ENCODE measurements at regions of chr17 and their contacts with region 1.

Region 1: GRCh38 chr17:61314368-61315078 is 85.1 kb upstream of the TBX2 start:
- DNase-seq: peak; percentile 69
- H3K4me3 ChIP-seq: no peak overlapping the region
- H3K27ac ChIP-seq: peak overlapping the region; percentile 60 to 74
- H3K4me1 ChIP-seq: peaks cover 27 to 37% of the 10 kb centered on the region in 2 experiments
- H3K27me3 ChIP-seq: no peaks in the 10 kb centered on the region
- CTCF ChIP-seq: peak; percentile 52
- EP300 ChIP-seq: peak in 1 of 2 experiments; percentile 86; a peak in 2 of 4 replicates
- RAD21 ChIP-seq: peak; percentile 53

Region 2: DNA sequence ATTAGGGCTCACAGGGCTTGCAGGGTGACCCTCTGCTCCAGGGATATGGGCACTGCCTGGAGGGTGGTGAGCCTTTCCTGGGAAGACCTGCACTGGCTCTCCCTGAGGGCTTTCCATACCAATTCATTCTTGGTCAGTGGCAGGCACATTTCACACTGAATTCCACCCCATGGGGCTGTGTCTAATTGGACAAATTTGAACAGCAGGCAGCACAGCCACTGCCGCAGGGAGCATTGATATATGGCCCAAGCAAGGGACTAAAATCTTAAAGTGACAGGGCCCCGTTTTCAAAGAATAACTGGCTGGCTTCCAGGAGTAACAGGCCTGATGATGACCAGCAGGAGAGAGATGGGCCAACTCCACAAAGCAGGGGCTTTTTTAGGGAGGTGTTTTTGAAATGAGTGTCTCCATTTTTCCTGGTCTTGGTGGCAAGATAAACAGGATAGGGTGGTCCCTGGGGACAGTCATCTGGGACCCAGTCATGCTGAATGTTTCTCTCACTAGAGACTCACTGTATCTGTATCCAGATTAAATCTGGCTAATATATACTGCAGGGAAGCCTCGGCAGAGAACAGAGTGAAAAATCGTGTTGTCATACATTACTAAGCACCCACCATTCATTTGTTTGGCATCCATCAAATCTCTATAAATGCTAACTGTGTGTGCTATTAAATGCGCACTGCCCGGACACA is 11.0 kb after region 1 on chr17:
- CTCF ChIA-PET with region 1: interaction called, 17 read pairs
- POLR2A ChIA-PET with region 1: no interaction called
- DNase-seq: peak; percentile 78
- H3K4me3 ChIP-seq: 0 out of 4 replicates have a peak overlapping the region, but pooled peaks of 1 of the 2 experiments have one; percentile 4
- H3K27ac ChIP-seq: peak overlapping the region; percentile 75 to 86
- H3K4me1 ChIP-seq: peaks cover 25 to 38% of the 10 kb centered on the region in 2 experiments
- H3K27me3 ChIP-seq: no peaks in the 10 kb centered on the region
- CTCF ChIP-seq: no peak; the same call in 1 of the 2 replicates
- EP300 ChIP-seq: peak; percentile 42 to 78
- RAD21 ChIP-seq: peak; percentile 16; the same call in 1 of the 2 replicates